Calu3 (cell line): ENCODE measurements at regions of chr4 and their contacts with region 1.

Region 1: GRCh38 chr4:26719954-26720552 is 136.2 kb downstream of the TBC1D19 start:
- DNase-seq: no peak
- H3K4me3 Mint-ChIP-seq: no peak overlapping the region
- H3K27ac Mint-ChIP-seq: no peak overlapping the region
- H3K4me1 Mint-ChIP-seq: no peaks in the 10 kb centered on the region
- H3K27me3 Mint-ChIP-seq: no peaks in the 10 kb centered on the region
- CTCF ChIP-seq: peak; percentile 35

Region 2: DNA sequence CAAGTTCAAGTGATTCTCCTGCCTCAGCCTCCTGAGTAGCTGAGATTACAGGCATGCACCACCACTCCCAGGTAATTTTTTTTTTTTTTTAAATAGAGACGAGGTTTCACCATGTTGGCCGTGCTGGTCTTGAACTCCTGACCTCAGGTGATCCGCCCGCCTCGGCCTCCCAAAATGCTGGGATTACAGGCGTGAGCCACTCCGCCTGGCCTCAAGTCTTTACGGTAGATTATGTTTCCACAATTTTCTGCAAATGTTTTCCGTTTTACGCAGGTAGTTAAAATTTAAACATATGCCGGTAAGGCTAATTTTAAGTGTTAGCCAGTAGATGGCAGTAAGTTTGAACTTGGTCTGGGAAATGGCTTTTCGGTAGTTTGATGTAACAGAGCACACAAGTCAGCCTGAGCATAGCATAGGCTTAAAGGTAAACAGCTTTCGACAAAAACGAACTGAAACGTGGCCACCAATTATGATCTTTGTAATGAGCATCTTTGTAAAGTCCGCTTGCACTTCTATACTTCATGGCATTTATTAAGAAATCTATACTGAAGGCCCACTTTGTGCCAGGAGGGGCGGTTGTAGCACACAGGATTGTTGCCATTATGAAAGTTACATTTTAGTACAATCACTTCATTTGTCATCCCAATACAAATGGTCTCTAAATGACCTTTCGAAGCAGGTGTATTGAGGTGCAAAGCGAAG is 260.8 kb before region 1 on chr4:
- CTCF ChIA-PET with region 1: interaction called, 3 read pairs
- intact Hi-C with region 1: loop called (anchors 2 kb)
- DNase-seq: peak; percentile 5
- H3K4me3 Mint-ChIP-seq: no peak overlapping the region
- H3K27ac Mint-ChIP-seq: no peak overlapping the region
- H3K4me1 Mint-ChIP-seq: no peaks in the 10 kb centered on the region
- H3K27me3 Mint-ChIP-seq: peaks cover 10% of the 10 kb centered on the region
- CTCF ChIP-seq: no peak

Region 3: GRCh38 chr4:27000820-27001219 is 280.8 kb after region 1 on chr4:
- CTCF ChIA-PET with region 1: no interaction called
- intact Hi-C with region 1: loop called (anchors 10 kb)
- DNase-seq: peak; percentile 3
- H3K4me3 Mint-ChIP-seq: no peak overlapping the region
- H3K27ac Mint-ChIP-seq: no peak overlapping the region
- H3K4me1 Mint-ChIP-seq: no peaks in the 10 kb centered on the region
- H3K27me3 Mint-ChIP-seq: no peaks in the 10 kb centered on the region
- CTCF ChIP-seq: no peak